Activated T-helper 1 cell treated with anti-CD3 and anti-CD28 coated beads, Interleukin-12 subunit alpha, Interleukin-12 subunit beta, Interleukin-2, Interleukin-4 antibody, amounts not matched to agents 30 ng/mL and 10 ng/mL and 1 ng/mL, durations not matched to agents 14 hours and 24 hours and 36 hours (primary cell): ENCODE measurements at regions of chr7 and their contacts with region 1.

Region 1: GRCh38 chr7:31466036-31466435 is 47.9 kb upstream of the ITPRID1 start:
- DNase-seq: no peak
- H3K4me3 Mint-ChIP-seq: no peak overlapping the region
- H3K27ac Mint-ChIP-seq: no peak overlapping the region
- H3K4me1 Mint-ChIP-seq: no peaks in the 10 kb centered on the region
- H3K27me3 Mint-ChIP-seq: no peaks in the 10 kb centered on the region

Region 2: GRCh38 chr7:31493714-31494181 is 27.7 kb after region 1 on chr7:
- intact Hi-C with region 1: loop called (anchors 1 kb)
- DNase-seq: no peak
- H3K4me3 Mint-ChIP-seq: no peak overlapping the region
- H3K27ac Mint-ChIP-seq: no peak overlapping the region
- H3K4me1 Mint-ChIP-seq: no peaks in the 10 kb centered on the region
- H3K27me3 Mint-ChIP-seq: no peaks in the 10 kb centered on the region

Region 3: GRCh38 chr7:31948029-31948428 is 482.0 kb after region 1 on chr7:
- intact Hi-C with region 1: no loop called
- DNase-seq: no peak
- H3K4me3 Mint-ChIP-seq: no peak overlapping the region
- H3K27ac Mint-ChIP-seq: no peak overlapping the region
- H3K4me1 Mint-ChIP-seq: no peaks in the 10 kb centered on the region
- H3K27me3 Mint-ChIP-seq: no peaks in the 10 kb centered on the region